ENCODE measurements at regions of chr14 and their contacts with region 1.

Region 1: DNA sequence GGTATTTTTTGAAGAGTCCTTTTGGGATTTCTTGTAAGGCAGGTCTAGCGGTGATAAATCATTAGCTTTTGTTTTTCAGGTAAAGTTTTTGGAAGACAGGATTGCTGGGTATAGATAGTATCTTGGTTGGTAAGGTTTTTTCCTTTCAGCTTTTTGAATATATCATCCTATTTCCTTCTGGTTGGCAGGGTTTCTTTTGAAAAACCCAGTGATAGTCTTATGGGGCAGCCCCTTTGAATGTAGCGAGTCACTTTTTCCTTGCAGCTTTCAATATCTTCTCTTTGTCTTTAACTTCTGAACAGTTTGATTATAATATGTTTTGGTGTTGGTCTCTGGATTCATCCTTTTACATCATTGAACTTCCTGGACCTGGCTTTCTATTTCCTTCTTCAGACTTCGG is 20.2 kb downstream of the TMX1 start:
- DNase-seq: no peak
- H3K4me3 Mint-ChIP-seq: peak overlapping the region; percentile 5
- H3K27ac Mint-ChIP-seq: peak overlapping the region; percentile 87
- H3K4me1 Mint-ChIP-seq: peaks cover 17% of the 10 kb centered on the region
- H3K27me3 Mint-ChIP-seq: no peaks in the 10 kb centered on the region

Region 2: GRCh38 chr14:50667996-50668825 is 592.0 kb before region 1 on chr14 and contains the start of gene SAV1:
- intact Hi-C with region 1: no loop called
- DNase-seq: peak; percentile 36
- H3K4me3 Mint-ChIP-seq: no peak within 1 kb of the TSS
- H3K27ac Mint-ChIP-seq: peak within 1 kb of the TSS; percentile 47
- H3K4me1 Mint-ChIP-seq: peaks cover 15% of the 10 kb centered on the region
- H3K27me3 Mint-ChIP-seq: no peaks in the 10 kb centered on the region
- total RNA-seq, gene SAV1: 13.1 and 13.5 TPM in 2 replicates

Region 3: GRCh38 chr14:51079489-51079888 is 180.7 kb before region 1 on chr14:
- intact Hi-C with region 1: no loop called
- DNase-seq: no peak
- H3K4me3 Mint-ChIP-seq: no peak overlapping the region
- H3K27ac Mint-ChIP-seq: no peak overlapping the region
- H3K4me1 Mint-ChIP-seq: no peaks in the 10 kb centered on the region
- H3K27me3 Mint-ChIP-seq: peaks cover 13% of the 10 kb centered on the region

Region 4: DNA sequence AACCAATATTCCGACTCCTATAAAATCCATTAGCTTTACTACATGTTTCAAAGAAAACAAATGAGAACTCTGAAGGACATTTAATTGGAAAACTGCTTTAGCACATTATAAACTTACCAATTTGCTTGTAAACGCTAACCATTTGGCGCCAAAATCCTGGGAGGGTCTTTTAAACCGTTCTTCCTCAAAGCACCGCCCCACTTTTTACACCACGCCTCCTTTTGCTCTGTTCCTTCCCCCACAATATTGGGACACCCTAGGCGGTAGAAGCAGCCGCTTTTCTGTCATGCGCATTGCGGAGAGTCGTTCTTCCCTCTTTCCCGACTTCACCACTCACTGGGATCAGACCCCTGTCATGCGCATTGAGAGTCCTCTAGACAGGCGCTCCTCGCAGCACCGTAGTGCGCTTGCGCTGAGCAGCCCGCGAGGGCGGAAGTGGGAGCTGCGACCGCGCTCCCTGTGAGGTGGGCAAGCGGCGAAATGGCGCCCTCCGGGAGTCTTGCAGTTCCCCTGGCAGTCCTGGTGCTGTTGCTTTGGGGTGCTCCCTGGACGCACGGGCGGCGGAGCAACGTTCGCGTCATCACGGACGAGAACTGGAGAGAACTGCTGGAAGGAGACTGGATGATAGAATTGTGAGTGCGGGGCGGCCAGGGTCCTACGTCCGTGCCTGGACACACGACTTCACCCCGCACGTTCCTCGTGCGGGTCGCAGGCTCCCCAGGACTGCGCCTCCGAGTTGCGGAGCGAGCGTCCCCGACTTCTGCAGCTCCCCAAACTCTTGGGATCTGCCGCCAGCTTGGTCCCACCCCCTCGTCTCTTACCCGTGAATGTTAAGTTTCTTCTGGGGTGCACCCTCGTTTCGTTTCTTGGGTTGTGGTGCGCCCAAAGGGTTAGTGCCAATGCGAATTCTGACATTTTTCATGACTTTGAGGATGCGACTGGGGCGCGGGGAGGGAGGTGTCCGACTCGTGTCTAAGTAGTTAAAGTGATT is 20.1 kb before region 1 on chr14 and contains the start of gene TMX1:
- intact Hi-C with region 1: loop called (anchors 1 kb)
- DNase-seq: peak; percentile 87
- H3K4me3 Mint-ChIP-seq: no peak within 1 kb of the TSS
- H3K27ac Mint-ChIP-seq: no peak within 1 kb of the TSS
- H3K4me1 Mint-ChIP-seq: peaks cover 25% of the 10 kb centered on the region
- H3K27me3 Mint-ChIP-seq: no peaks in the 10 kb centered on the region
- total RNA-seq, gene TMX1: 55.1 and 55.2 TPM in 2 replicates

Measured in activated T-helper 2 cell treated with anti-CD3 and anti-CD28 coated beads, Interferon-gamma antibody, Interleukin-2, Interleukin-4, amounts not matched to agents 10 μg/mL and 5 μg/mL and 100 μg/mL, durations not matched to agents 14 hours and 24 hours and 36 hours (primary cell).